Activated CD8-positive, alpha-beta T cell treated with anti-CD3 and anti-CD28 coated beads for 36 hours (primary cell): ENCODE measurements at regions of chr1 and their contacts with region 1.

Region 1: GRCh38 chr1:34865981-34866761 is 6.6 kb upstream of the SMIM12 start:
- DNase-seq: peak; percentile 96
- ATAC-seq: peak; percentile 68
- H3K4me3 Mint-ChIP-seq: peak overlapping the region; percentile 77
- H3K27ac Mint-ChIP-seq: peak overlapping the region; percentile 90
- H3K4me1 Mint-ChIP-seq: peaks cover 29% of the 10 kb centered on the region
- H3K27me3 Mint-ChIP-seq: no peaks in the 10 kb centered on the region
- CTCF ChIP-seq: peak; percentile 97

Region 2: GRCh38 chr1:34829250-34829649 is 36.9 kb before region 1 on chr1:
- CTCF ChIA-PET with region 1: no interaction called
- POLR2A ChIA-PET with region 1: no interaction called
- intact Hi-C with region 1: no loop called
- DNase-seq: no peak
- ATAC-seq: no peak
- H3K4me3 Mint-ChIP-seq: no peak overlapping the region
- H3K27ac Mint-ChIP-seq: no peak overlapping the region
- H3K4me1 Mint-ChIP-seq: no peaks in the 10 kb centered on the region
- H3K27me3 Mint-ChIP-seq: no peaks in the 10 kb centered on the region
- CTCF ChIP-seq: no peak

Region 3: DNA sequence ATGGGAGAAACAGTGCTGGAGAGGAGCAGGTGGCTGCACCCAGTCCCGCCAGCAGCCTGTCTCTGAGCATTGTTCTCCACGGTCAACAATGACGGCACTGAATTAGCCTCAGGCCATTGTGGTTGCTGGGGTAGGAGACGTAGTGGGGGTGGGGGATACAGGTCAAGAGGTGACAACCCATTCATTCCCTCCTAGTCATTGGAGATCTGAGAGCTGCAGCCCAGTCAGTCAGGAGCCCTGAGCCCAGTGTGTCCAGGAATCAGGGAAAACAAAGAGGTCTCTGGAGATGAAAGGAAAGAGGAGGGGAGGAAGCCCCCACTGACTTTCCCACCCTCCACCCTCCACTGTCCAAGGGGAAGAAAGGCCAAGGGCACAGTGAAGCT is 21.9 kb before region 1 on chr1:
- CTCF ChIA-PET with region 1: no interaction called
- POLR2A ChIA-PET with region 1: no interaction called
- intact Hi-C with region 1: no loop called
- DNase-seq: no peak
- ATAC-seq: no peak
- H3K4me3 Mint-ChIP-seq: no peak overlapping the region
- H3K27ac Mint-ChIP-seq: no peak overlapping the region
- H3K4me1 Mint-ChIP-seq: peaks cover 10% of the 10 kb centered on the region
- H3K27me3 Mint-ChIP-seq: no peaks in the 10 kb centered on the region
- CTCF ChIP-seq: no peak

Region 4: DNA sequence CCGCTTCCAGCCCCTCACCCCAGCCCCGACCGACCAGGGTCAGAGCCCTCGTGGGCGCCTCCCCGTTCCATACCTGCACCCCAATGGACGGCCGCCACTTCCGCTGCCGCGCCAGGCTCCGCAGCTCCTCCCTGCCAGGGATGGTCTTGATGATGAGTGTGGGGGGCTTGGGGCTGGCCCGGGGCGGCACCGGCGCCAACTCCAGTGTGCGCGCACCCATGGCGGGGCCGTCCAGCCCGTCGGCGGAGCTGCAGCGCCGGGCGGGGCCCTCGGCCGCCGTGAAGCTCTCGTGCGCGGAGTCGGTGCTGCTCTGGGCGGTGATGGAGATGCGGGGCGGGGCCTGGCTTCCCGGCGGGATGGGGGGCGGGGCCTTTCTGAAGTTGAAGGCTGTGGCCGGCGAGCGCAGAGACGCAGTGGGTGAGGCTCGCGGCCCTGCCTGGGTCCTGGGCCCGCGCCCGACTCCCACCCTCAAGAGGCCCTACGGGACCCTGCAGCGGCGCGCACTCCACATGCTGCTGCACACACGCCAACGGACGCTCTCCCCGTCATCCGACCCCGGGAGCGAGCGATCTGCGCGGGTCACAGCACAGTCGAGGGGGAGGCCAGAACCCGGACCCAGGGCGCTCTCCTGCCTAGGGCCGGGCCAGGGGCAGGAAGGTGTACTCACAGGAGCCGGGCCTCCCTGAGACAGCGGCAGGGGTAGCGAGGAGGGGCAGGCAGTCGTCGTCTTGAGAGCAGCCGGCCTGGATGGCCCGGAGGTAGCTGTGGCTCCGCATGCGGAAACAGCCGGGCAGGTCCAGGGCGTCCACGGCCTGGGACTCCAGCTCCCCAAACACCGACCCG is 19.5 kb after region 1 on chr1:
- CTCF ChIA-PET with region 1: interaction called, 24 read pairs
- POLR2A ChIA-PET with region 1: no interaction called
- intact Hi-C with region 1: no loop called
- DNase-seq: peak; percentile 71
- ATAC-seq: peak; percentile 85
- H3K4me3 Mint-ChIP-seq: peak overlapping the region; percentile 63
- H3K27ac Mint-ChIP-seq: no peak overlapping the region
- H3K4me1 Mint-ChIP-seq: no peaks in the 10 kb centered on the region
- H3K27me3 Mint-ChIP-seq: peaks cover 27% of the 10 kb centered on the region
- CTCF ChIP-seq: no peak

Region 5: DNA sequence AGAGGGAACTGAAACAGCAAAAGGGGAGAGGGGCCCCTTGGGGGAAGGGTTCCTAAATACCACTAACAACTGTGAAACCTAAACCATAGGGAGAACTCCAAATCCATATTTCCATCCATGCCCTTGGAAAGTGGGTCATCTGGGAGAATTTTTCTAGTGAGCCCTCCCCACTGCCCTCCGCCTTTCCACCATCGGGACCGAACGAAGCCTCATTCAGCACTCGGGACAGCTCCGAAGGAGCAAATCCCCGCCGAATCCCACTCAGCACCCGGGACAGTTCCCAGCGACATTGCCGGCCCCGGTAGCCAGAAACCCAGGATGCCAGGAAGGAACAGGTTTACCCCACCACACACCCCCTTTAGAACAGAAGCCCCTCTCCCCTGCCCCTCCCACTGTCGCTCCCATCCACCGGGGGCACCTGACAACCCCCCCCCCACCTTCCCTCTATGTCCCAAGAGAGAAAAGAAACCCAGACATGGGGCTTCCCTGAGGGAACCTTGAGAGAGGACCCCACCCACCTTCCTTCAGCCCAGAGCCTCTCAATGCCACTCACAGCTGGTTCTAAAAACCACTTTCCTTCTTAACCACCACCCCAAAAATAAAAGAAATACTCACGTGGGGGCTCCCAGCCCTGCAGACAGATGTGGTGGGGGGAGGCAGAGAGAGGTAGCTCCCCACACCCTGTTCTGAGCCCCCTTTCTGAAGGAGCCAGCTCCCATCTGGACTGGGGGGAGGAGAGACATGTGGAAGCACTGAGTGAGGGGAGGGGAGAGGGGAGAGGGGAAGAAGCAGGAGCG is 58.8 kb after region 1 on chr1:
- CTCF ChIA-PET with region 1: no interaction called
- POLR2A ChIA-PET with region 1: no interaction called
- intact Hi-C with region 1: no loop called
- DNase-seq: peak; percentile 71
- ATAC-seq: peak; percentile 72
- H3K4me3 Mint-ChIP-seq: no peak overlapping the region
- H3K27ac Mint-ChIP-seq: no peak overlapping the region
- H3K4me1 Mint-ChIP-seq: peaks cover 7% of the 10 kb centered on the region
- H3K27me3 Mint-ChIP-seq: peaks cover 61% of the 10 kb centered on the region
- CTCF ChIP-seq: no peak

Region 6: DNA sequence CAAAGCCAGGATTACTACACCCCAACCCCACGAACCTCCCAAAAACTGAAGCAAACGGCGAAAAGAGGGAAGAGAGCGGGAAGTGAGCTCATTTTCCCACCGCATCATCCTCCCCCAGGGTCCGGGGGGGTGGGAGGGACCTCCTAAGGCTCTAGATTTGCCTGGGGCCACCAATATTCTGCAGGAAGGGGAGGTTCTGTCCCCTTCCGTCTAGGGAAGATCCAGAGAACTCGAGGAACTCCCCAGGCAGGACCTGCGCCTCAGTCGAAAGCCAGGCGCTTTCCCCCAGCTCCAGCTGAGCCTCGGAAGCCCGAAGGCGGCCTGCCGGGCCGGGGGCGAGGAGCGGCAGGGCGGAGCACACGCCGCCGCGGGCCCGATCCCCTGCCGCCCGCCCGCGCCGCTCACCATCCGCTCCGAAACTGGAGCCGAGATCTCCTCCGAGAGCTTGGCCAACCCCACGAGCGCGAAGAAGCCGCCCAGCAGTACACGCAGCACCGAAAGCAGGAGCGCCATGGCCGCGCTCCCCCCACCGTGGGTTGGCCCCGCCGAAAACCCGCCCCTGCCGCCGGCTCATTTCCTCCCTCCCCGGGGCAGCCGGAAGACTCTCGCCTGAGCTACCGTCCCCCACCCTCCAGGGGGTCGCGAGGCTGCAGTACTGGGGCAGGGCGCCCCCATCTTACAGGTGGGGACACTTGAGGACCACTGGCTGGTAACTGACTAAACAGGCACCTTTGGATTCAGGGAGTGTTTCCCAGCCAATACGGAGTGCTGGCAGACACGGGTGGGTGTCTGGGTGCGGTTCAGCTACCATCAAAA is 118.8 kb after region 1 on chr1 and contains the start of gene TMEM35B:
- CTCF ChIA-PET with region 1: interaction called, 10 read pairs
- POLR2A ChIA-PET with region 1: interaction called, 4 read pairs
- intact Hi-C with region 1: no loop called
- DNase-seq: peak; percentile 82
- ATAC-seq: peak; percentile 94
- H3K4me3 Mint-ChIP-seq: peak within 1 kb of the TSS; percentile 98
- H3K27ac Mint-ChIP-seq: peak within 1 kb of the TSS; percentile 98
- H3K4me1 Mint-ChIP-seq: peaks cover 48% of the 10 kb centered on the region
- H3K27me3 Mint-ChIP-seq: no peaks in the 10 kb centered on the region
- CTCF ChIP-seq: peak; percentile 29
- total RNA-seq, gene TMEM35B: 19.4 to 19.5 TPM